CD4-positive, alpha-beta T cell (primary cell): ENCODE measurements at regions of chr13 and their contacts with region 1.

Region 1: DNA sequence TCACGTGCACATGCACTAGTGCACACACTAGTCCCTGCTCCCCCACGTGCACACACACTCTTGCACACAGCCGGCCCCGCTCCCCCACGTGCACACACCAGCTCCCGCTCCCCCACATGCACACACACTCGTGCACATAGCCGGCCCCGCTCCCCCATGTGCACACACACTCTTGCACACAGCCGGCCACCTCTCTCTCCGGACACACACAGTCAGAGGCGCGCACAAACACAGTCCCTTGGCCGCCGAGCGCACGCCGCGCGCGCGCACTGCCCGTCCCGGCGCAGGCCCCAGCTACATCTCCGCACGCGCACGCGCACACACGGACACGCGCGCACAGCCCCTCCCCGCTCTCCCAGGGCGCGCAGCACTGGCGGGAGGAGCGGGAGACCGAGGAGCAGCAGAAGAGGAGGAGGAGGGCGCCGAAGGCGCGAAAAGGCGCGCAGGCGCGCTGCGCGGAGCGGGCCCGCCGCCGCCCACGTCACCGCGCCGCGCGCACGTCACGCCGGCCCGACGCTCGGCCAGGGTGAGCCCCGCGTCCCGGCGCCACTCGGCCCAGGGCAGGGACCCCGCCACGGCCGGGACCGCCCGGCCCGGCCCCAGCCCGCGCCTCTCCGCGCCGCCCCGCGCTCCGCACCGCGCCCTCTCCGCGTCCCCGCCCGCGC is at the start of gene TFDP1:
- DNase-seq: peak; percentile 27 to 80 (median 54)
- ATAC-seq: peak; percentile 72
- H3K4me3 ChIP-seq: peak within 1 kb of the TSS; percentile 50
- H3K4me3 Mint-ChIP-seq: peak within 1 kb of the TSS; percentile 92
- H3K27ac ChIP-seq: no peak within 1 kb of the TSS
- H3K27ac Mint-ChIP-seq: peak within 1 kb of the TSS; percentile 39
- H3K4me1 ChIP-seq: peaks cover 33% of the 10 kb centered on the region
- H3K4me1 Mint-ChIP-seq: peaks cover 29% of the 10 kb centered on the region
- H3K27me3 ChIP-seq: no peaks in the 10 kb centered on the region
- H3K27me3 Mint-ChIP-seq: peaks cover 4% of the 10 kb centered on the region
- CTCF ChIP-seq: no peak
- total RNA-seq, gene TFDP1: 17.6 to 20.0 TPM

Region 2: GRCh38 chr13:113633956-113634676 is 49.8 kb after region 1 on chr13:
- CTCF ChIA-PET with region 1: no interaction called
- POLR2A ChIA-PET with region 1: no interaction called
- intact Hi-C with region 1: loop called in 1 of 2 experiments (anchors 2 kb)
- DNase-seq: peak in 2 of 14 experiments; percentile 29 to 34
- ATAC-seq: peak; percentile 93
- H3K4me3 ChIP-seq: no peak overlapping the region
- H3K4me3 Mint-ChIP-seq: peak overlapping the region; percentile 43
- H3K27ac ChIP-seq: no peak overlapping the region
- H3K27ac Mint-ChIP-seq: peak overlapping the region; percentile 88
- H3K4me1 ChIP-seq: peaks cover 20% of the 10 kb centered on the region
- H3K4me1 Mint-ChIP-seq: peaks cover 26% of the 10 kb centered on the region
- H3K27me3 ChIP-seq: no peaks in the 10 kb centered on the region
- H3K27me3 Mint-ChIP-seq: no peaks in the 10 kb centered on the region
- CTCF ChIP-seq: no peak